Dorsolateral prefrontal cortex (tissue), 120 donors: ENCODE measurements at regions of chr9 and their contacts with region 1.

Region 1: DNA sequence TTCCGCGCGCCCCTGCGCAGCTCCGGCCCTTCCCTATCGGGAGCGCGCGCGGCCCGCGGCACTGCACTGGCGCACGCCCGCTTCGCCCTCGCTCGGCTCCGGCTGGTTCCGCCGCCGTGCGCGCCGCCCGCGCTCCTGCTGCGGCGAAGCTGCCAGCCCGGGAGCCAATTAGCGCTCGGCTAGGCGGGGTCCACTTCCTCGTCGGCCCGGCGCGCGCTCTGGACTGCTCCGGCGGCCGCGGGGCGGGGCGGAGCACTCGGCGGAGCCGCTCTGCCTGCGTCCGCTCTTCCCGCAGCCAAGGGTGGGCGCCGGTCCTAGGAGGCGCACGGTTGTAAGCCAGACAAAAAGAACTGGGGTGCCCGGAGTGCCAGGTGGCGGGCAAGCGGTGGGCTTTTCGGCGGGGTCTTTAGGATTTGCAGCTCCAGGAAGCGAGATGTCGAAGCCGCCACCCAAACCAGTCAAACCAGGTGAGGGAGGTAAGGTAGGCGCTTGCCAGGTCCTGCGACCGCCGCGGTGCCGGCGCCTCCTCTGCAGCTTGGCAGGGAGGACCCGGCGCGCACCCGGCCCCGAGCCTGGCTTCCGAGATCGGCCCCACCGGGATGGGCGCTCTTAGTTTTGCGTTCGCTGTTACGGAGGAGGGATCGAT is at the start of gene OSTF1:
- DNase-seq: peak; percentile 82 to 97 (median 94)
- H3K4me3 ChIP-seq: peak within 1 kb of the TSS; percentile 78 to 100 (median 95)
- H3K27ac ChIP-seq: peak within 1 kb of the TSS; percentile 74 to 100 (median 96)
- H3K27me3 ChIP-seq: no peaks in the 10 kb centered on the region
- CTCF ChIP-seq: peak in 14 of 56 donors; percentile 8 to 49 (median 17)
- total RNA-seq, gene OSTF1: 26.5 to 76.4 (median 58.6) TPM

Region 2: GRCh38 chr9:74696520-74696919 is 391.9 kb before region 1 on chr9:
- intact Hi-C with region 1: no loop called
- DNase-seq: no peak
- H3K4me3 ChIP-seq: no peak overlapping the region
- H3K27ac ChIP-seq: peak overlapping the region in 7 of 59 donors; percentile 5 to 48 (median 31)
- H3K27me3 ChIP-seq: no peaks in the 10 kb centered on the region
- CTCF ChIP-seq: no peak

Region 3: GRCh38 chr9:74773886-74774479 is 314.4 kb before region 1 on chr9:
- intact Hi-C with region 1: loop called in 1 of 2 experiments (anchors 5 kb)
- DNase-seq: peak; percentile 72 to 94 (median 84)
- H3K4me3 ChIP-seq: no peak overlapping the region
- H3K27ac ChIP-seq: peak overlapping the region in 4 of 59 donors; percentile 20 to 83 (median 30)
- H3K27me3 ChIP-seq: peaks cover 0 to 2% (median 0%) of the 10 kb centered on the region in 45 donors
- CTCF ChIP-seq: peak; percentile 83 to 100 (median 94)

Region 4: GRCh38 chr9:75027187-75028107 is 60.9 kb before region 1 on chr9:
- intact Hi-C with region 1: loop called (anchors 1 to 5 kb)
- DNase-seq: peak; percentile 33 to 66 (median 48)
- H3K4me3 ChIP-seq: peak overlapping the region; percentile 64 to 97 (median 85)
- H3K27ac ChIP-seq: peak overlapping the region; percentile 75 to 97 (median 91)
- H3K27me3 ChIP-seq: no peaks in the 10 kb centered on the region
- CTCF ChIP-seq: peak in 2 of 56 donors; percentile 4 to 25

Region 5: GRCh38 chr9:75185585-75186170 is 97.3 kb after region 1 on chr9:
- intact Hi-C with region 1: loop called in 1 of 2 experiments (anchors 5 kb)
- DNase-seq: peak in 3 of 10 donors; percentile 10 to 53 (median 32)
- H3K4me3 ChIP-seq: no peak overlapping the region
- H3K27ac ChIP-seq: no peak overlapping the region
- H3K27me3 ChIP-seq: no peaks in the 10 kb centered on the region
- CTCF ChIP-seq: peak in 52 of 56 donors; percentile 23 to 62 (median 44)

Region 6: DNA sequence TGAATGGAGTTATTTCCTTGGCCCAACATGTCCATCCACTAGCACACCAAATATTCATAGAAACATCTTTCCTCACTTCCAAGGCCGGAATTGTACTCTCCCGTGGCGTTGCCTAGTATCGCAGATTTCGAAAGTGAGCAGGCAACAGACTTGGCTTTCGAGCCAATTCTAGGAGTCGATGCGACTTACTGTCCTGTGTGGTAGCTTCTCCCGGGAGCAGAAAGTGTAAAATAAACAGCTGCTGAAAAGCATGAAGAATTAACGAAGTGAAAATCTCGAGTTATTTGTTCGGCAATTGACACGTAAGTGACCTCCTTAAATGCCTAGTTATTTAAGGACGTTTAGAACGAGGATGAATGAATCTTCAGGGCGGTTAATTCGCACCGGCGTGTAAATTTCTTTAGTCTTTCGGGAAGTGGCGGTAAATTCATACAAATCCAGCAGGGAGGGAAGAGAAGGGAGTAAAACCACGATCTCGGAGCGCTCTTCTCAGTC is 801.6 kb after region 1 on chr9:
- intact Hi-C with region 1: no loop called
- DNase-seq: peak in 1 of 10 donors; percentile 43
- H3K4me3 ChIP-seq: peak overlapping the region; percentile 46 to 89 (median 82)
- H3K27ac ChIP-seq: peak overlapping the region in 56 of 59 donors; percentile 13 to 93 (median 79)
- H3K27me3 ChIP-seq: peaks cover 0 to 8% (median 0%) of the 10 kb centered on the region in 45 donors
- CTCF ChIP-seq: no peak